Gastrocnemius medialis (tissue), 4 donors: ENCODE measurements at regions of chr15 and their contacts with region 1.

Region 1: DNA sequence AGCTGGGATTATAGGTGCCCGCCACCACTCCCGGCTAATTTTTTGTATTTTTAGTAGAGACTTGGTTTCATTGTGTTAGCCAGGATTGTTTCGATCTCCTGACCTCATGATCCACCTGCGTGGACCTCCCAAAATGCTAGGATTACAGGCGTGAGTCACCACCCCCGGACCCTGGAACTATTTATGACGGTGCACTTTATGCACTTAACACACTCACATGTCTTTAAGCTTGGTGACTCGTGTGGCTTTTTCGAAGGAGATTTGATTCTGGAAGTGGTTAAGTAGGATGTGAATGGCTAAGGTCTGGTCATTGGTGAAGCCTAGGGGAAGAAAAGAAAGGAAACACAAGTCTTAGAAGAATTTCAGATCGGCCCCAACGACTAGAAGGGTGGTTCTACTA is 20.3 kb downstream of the BBS4 start:
- DNase-seq: no peak
- ATAC-seq: no peak
- H3K4me3 ChIP-seq: no peak overlapping the region
- H3K27ac ChIP-seq: no peak overlapping the region
- H3K4me1 ChIP-seq: no peaks in the 10 kb centered on the region
- H3K27me3 ChIP-seq: no peaks in the 10 kb centered on the region
- CTCF ChIP-seq: no peak
- POLR2A ChIP-seq: no peak

Region 2: GRCh38 chr15:72532991-72533601 is 173.2 kb before region 1 on chr15:
- in situ Hi-C with region 1: no loop called
- intact Hi-C with region 1: no loop called
- DNase-seq: no peak
- ATAC-seq: no peak
- H3K4me3 ChIP-seq: no peak overlapping the region
- H3K27ac ChIP-seq: no peak overlapping the region
- H3K4me1 ChIP-seq: peaks cover 0 to 7% of the 10 kb centered on the region in 2 donors
- H3K27me3 ChIP-seq: no peaks in the 10 kb centered on the region
- CTCF ChIP-seq: peak in 4 of 5 experiments; percentile 33 to 47 (median 38)
- POLR2A ChIP-seq: no peak

Region 3: DNA sequence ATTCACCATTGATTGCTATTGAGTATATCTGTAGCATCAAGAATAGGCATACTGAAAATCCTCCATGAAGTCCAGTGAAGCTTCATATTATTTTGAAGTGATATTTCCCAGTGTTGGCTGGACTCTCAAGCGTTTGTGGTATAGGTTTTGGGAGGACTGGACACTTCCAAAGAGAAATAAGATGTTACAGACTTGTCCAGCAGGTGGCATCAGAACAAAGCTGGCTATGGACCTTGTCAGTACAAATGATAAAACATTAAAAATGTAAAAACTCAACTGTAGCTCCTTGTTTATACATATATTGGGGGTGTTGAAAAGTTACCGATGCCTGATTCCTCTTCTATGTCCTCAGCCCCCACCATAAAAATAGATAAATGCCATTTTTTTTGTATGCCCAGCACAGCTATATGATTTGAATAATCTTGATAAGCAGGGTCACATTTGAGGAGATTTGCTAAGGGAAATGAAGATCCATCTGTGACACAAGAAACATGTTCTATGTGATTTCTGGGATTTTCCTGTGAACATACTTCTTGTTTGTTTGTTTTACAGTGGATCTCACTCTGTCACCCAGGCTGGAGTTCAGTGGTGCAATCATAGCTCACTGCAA is 106.3 kb before region 1 on chr15:
- in situ Hi-C with region 1: loop called in 1 of 4 experiments (anchors 10 kb)
- intact Hi-C with region 1: no loop called
- DNase-seq: no peak
- ATAC-seq: peak in 1 of 2 donors; percentile 46
- H3K4me3 ChIP-seq: no peak overlapping the region
- H3K27ac ChIP-seq: no peak overlapping the region
- H3K4me1 ChIP-seq: no peaks in the 10 kb centered on the region
- H3K27me3 ChIP-seq: no peaks in the 10 kb centered on the region
- CTCF ChIP-seq: peak in 4 of 5 experiments; percentile 42 to 55 (median 44)
- POLR2A ChIP-seq: no peak

Region 4: GRCh38 chr15:72751751-72752455 is 45.6 kb after region 1 on chr15:
- in situ Hi-C with region 1: no loop called
- intact Hi-C with region 1: loop called (anchors 5 kb)
- DNase-seq: no peak
- ATAC-seq: no peak
- H3K4me3 ChIP-seq: no peak overlapping the region
- H3K27ac ChIP-seq: no peak overlapping the region
- H3K4me1 ChIP-seq: no peaks in the 10 kb centered on the region
- H3K27me3 ChIP-seq: no peaks in the 10 kb centered on the region
- CTCF ChIP-seq: no peak
- POLR2A ChIP-seq: no peak